Activated T-helper 1 cell treated with anti-CD3 and anti-CD28 coated beads, Interleukin-12 subunit alpha, Interleukin-12 subunit beta, Interleukin-2, Interleukin-4 antibody, amounts not matched to agents 30 ng/mL and 10 ng/mL and 1 ng/mL, durations not matched to agents 14 hours and 24 hours and 36 hours (primary cell): ENCODE measurements at regions of chr2 and their contacts with region 1.

Region 1: DNA sequence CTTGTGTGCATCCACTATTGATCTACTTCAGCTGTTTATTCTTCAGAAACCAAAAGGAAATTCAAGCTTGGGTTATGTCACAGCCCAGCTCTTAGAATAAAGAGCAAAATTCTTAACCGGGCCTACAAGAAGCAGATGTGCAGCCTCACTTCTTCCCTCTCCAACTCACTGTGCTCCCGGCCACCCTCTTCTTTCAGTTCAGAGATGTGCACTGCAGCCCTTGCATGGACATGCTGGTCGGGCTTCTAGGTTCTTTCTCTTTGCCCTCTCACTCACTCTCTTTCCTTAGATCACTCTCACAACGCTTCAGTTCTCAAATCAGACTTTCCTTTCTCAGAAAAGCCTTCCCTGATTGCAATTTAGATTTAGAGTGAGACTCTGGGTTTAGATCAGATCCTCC is 104.1 kb downstream of the CHN1 start:
- DNase-seq: no peak
- H3K4me3 Mint-ChIP-seq: peak overlapping the region; percentile 38
- H3K27ac Mint-ChIP-seq: peak overlapping the region; percentile 49
- H3K4me1 Mint-ChIP-seq: peaks cover 20% of the 10 kb centered on the region
- H3K27me3 Mint-ChIP-seq: no peaks in the 10 kb centered on the region

Region 2: DNA sequence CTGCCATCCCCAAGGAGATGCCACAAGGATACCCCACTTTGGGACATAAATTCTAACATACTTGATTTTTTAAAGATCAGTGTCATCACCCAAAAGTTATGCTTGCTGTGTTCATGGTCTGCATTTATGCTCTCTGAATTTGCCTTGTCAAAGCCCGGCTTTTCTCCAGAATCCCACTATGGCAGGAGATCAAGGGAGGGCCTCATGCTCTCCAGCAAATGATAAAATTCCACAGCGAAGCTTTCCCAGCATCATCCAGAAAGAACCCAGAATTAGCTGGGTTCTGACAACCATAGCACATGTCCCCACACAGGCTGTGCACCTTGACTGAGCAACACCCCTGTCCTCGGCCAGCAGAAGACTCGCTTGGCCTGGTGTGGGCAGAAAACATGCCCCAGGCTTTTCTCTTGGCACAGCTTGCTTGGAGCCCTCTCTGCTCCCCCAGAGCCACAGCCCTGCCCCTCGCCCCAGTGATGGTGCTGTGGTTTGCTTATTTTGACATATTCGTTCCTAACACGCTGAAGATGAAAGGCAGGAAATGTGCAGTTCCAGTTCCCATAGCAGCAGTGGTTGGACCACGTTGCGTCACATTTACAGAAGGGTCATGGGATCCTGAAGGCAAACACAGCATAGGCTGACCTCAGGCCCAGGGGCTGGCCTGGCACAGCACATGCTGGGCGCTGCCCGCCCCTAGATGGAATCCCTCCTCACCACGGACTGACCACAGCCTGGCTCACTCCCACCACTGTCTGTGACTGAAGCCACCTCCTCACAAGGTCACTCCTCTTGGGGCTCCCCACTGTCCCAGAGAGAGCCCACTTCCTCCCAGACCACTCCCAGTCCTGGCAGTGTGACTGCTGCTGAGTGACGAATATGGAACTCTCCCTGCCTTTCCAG is 122.7 kb before region 1 on chr2:
- intact Hi-C with region 1: loop called (anchors 5 kb)
- DNase-seq: peak; percentile 76
- H3K4me3 Mint-ChIP-seq: peak overlapping the region; percentile 58
- H3K27ac Mint-ChIP-seq: peak overlapping the region; percentile 83
- H3K4me1 Mint-ChIP-seq: peaks cover 50% of the 10 kb centered on the region
- H3K27me3 Mint-ChIP-seq: peaks cover 2% of the 10 kb centered on the region